GM23248 (cell line): ENCODE measurements at regions of chr6 and their contacts with region 1.

Region 1: GRCh38 chr6:130885392-130886192 is 58.4 kb downstream of the SMLR1 start:
- DNase-seq: peak; percentile 71
- H3K4me3 ChIP-seq: no peak overlapping the region
- H3K27ac ChIP-seq: no peak overlapping the region
- H3K4me1 ChIP-seq: peaks cover 5% of the 10 kb centered on the region
- H3K27me3 ChIP-seq: no peaks in the 10 kb centered on the region

Region 2: GRCh38 chr6:131038597-131039344 is 153.2 kb after region 1 on chr6:
- in situ Hi-C with region 1: no loop called
- DNase-seq: peak; percentile 74
- H3K4me3 ChIP-seq: peak overlapping the region; percentile 25
- H3K27ac ChIP-seq: peak overlapping the region; percentile 37
- H3K4me1 ChIP-seq: peaks cover 50% of the 10 kb centered on the region
- H3K27me3 ChIP-seq: no peaks in the 10 kb centered on the region

Region 3: DNA sequence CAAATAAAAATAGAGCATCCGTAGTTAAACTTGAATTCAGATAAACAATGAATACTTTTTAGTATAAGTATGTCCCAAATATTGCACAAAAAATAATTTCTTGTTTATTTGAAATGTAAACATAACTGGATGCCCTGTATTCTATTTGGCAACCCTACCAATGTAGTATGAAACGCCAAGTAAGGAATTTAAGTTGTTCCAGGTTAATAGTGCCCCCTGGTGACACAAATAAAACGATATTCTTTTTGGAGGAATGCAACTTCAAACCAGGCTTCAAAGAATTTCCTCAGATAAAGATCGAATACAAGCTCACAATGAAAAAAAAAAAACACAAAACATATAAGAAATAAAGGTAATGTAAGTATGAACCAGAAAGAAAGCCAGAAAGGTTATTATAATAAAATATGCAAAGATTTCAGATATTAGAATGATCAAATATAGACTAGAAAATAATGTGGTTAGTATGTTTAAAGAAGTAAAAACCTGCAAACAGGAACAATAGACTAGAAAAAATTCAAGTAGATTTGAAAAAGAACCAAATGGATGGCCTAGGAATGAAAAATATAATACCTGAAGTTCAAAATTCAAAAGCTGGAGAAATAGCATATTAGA is 231.3 kb after region 1 on chr6:
- in situ Hi-C with region 1: loop called (anchors 5 kb)
- DNase-seq: peak; percentile 69
- H3K4me3 ChIP-seq: no peak overlapping the region
- H3K27ac ChIP-seq: no peak overlapping the region
- H3K4me1 ChIP-seq: peaks cover 3% of the 10 kb centered on the region; the same call in 1 of the 2 replicates
- H3K27me3 ChIP-seq: no peaks in the 10 kb centered on the region

Region 4: DNA sequence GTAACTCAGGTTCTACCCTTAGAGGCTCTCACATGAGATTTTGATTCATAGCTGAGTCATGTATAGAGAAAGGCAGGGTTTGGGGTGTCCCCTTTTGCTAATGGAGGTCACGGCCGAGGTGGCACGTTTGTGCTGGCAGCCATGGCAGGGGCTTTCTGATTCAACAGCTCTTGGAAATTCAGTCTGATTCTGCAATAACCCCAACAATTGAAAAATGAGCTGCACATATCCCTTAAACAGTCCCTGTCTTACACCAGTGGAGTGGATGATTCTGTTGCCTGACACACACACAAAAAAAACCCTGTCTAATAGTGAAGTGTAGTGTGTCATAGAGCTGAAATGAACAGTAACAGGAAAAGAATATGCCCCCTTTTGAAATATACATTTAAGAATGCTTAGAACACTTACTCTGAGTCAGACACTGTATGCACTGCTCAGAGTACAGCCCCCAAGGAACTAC is 647.0 kb after region 1 on chr6:
- in situ Hi-C with region 1: loop called (anchors 25 kb)
- DNase-seq: peak; percentile 31
- H3K4me3 ChIP-seq: no peak overlapping the region
- H3K27ac ChIP-seq: no peak overlapping the region
- H3K4me1 ChIP-seq: 0 out of 2 replicates have a peak, but pooled peaks cover 3% of the 10 kb centered on the region
- H3K27me3 ChIP-seq: 0 out of 2 replicates have a peak, but pooled peaks cover under 1% of the 10 kb centered on the region